ENCODE measurements at regions of chr3 and their contacts with region 1.

Region 1: GRCh38 chr3:132180337-132180791 is 136.8 kb upstream of the ACP3 start:
- DNase-seq: no peak
- H3K4me3 Mint-ChIP-seq: no peak overlapping the region
- H3K27ac Mint-ChIP-seq: no peak overlapping the region
- H3K4me1 Mint-ChIP-seq: peaks cover 3% of the 10 kb centered on the region
- H3K27me3 Mint-ChIP-seq: peaks cover 5% of the 10 kb centered on the region

Region 2: DNA sequence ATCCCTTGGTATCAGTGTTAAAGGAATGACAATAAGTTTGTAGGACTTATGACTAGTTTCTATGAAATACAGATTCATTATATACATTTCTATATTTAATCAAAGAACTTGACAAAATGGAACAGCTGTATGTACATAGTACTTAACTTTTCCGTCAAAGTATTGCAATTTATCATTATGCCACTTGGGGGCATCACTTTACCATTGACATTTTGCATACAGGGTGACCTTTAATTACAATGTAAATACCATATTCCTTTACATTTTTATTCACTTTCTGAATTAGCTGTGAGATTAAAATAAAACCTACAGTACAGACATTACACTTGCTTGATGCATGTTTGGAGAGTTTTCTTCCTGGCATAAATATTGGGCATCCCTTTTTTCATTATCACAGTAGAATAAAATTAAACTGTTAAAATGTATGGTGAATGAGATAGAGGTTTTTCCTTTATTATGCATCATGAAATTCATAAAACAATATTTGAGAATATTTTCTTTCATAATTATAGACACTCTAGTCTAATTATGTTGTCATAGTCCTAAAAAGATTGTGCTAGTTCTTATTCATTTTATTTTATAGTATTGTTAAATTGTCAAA is 1146.8 kb before region 1 on chr3:
- CTCF ChIA-PET with region 1: no interaction called
- intact Hi-C with region 1: loop called (anchors 5 kb)
- DNase-seq: peak; percentile 22
- H3K4me3 Mint-ChIP-seq: no peak overlapping the region
- H3K27ac Mint-ChIP-seq: no peak overlapping the region
- H3K4me1 Mint-ChIP-seq: no peaks in the 10 kb centered on the region
- H3K27me3 Mint-ChIP-seq: no peaks in the 10 kb centered on the region

Region 3: GRCh38 chr3:131794766-131795388 is 385.5 kb before region 1 on chr3:
- CTCF ChIA-PET with region 1: no interaction called
- intact Hi-C with region 1: loop called (anchors 1 kb)
- DNase-seq: peak; percentile 43
- H3K4me3 Mint-ChIP-seq: no peak overlapping the region
- H3K27ac Mint-ChIP-seq: no peak overlapping the region
- H3K4me1 Mint-ChIP-seq: peaks cover 8% of the 10 kb centered on the region
- H3K27me3 Mint-ChIP-seq: peaks cover 13% of the 10 kb centered on the region

Region 4: DNA sequence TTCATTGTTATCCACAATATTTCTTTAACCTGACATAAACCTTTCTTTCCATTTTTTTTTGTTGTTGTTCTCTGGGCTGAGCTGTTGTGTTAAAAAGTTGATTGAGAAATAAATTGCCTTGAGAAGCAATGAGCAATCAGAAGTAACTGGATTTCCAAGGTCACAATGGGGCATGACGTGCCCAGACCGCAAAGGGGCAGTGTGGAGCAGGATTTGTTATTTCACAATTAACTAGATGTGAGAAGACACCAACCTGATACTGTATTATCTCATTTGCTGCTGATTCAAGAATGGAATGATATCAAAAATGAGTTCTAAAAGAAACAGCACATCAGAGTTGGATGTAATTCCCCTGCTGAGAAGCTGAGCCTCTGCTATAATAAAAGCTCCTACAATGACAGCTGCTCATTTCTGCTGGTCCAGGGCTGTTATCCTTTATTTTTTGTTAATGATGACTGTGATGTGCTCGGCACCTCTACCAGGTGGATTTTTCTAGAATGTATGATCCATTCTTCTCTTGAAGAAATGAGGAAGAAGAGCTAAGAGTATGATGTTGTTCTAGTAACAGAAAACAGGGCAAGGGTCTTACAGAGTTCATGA is 173.7 kb before region 1 on chr3:
- CTCF ChIA-PET with region 1: no interaction called
- intact Hi-C with region 1: loop called (anchors 1 kb)
- DNase-seq: peak; percentile 47
- H3K4me3 Mint-ChIP-seq: no peak overlapping the region
- H3K27ac Mint-ChIP-seq: no peak overlapping the region
- H3K4me1 Mint-ChIP-seq: no peaks in the 10 kb centered on the region
- H3K27me3 Mint-ChIP-seq: peaks cover 9% of the 10 kb centered on the region

Region 5: GRCh38 chr3:132038198-132038825 is 142.1 kb before region 1 on chr3:
- CTCF ChIA-PET with region 1: interaction called, 6 read pairs
- intact Hi-C with region 1: loop called (anchors 2 kb)
- DNase-seq: no peak
- H3K4me3 Mint-ChIP-seq: no peak overlapping the region
- H3K27ac Mint-ChIP-seq: no peak overlapping the region
- H3K4me1 Mint-ChIP-seq: peaks cover 8% of the 10 kb centered on the region
- H3K27me3 Mint-ChIP-seq: peaks cover 60% of the 10 kb centered on the region